ENCODE measurements at regions of chr18 and their contacts with region 1.

Region 1: GRCh38 chr18:59402432-59403090 is 43.5 kb upstream of the LMAN1 start:
- DNase-seq: peak; percentile 83
- H3K4me3 ChIP-seq: no peak overlapping the region
- H3K27ac ChIP-seq: no peak overlapping the region
- H3K4me1 ChIP-seq: peaks cover 0 to 4% (median 0%) of the 10 kb centered on the region in 6 donors
- H3K27me3 ChIP-seq: peaks cover 0 to 8% (median 0%) of the 10 kb centered on the region in 7 donors
- CTCF ChIP-seq: peak; percentile 67 to 88 (median 83)
- POLR2A ChIP-seq: no peak

Region 2: GRCh38 chr18:59249205-59249774 is 153.3 kb before region 1 on chr18:
- intact Hi-C with region 1: loop called (anchors 5 kb)
- DNase-seq: no peak
- H3K4me3 ChIP-seq: no peak overlapping the region
- H3K27ac ChIP-seq: no peak overlapping the region
- H3K4me1 ChIP-seq: no peaks in the 10 kb centered on the region
- H3K27me3 ChIP-seq: peaks cover 0 to 52% (median 17%) of the 10 kb centered on the region in 7 donors
- CTCF ChIP-seq: peak in 10 of 11 experiments; percentile 21 to 70 (median 52)
- POLR2A ChIP-seq: no peak

Region 3: DNA sequence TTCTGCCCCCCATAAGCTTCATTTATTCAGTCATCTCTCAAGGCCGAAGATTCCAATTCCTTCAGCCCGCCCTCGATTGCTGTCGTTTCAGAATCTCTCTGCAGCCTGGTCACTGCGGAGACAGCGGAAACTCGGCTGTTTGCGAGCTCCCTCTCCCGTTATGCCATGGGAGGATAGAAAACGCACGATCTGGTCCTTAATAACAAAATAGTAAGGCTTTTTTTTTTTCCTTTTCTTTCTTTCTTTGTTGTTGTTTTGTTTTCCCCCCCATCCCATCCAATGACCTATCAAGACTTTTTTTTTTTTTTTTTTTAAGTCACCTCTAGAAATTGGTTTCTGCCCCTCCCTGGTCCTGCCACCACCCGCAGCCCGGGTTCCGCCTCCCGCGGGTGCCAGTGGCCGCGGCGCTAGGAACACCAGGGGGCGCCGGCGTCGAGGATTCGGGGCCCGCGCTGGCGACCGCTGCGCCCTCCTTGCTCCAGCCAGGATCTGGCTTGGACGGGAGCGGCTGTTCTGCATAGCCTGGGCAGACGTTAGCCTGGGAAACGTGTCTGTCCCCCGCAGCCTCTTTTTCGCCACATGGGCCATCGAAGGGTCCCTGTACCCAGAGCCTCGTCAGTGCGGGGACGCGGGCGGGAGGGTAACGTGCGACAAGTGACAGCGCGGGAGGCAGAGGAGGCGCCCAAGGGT is 94.2 kb before region 1 on chr18:
- intact Hi-C with region 1: loop called (anchors 5 kb)
- DNase-seq: peak; percentile 86
- H3K4me3 ChIP-seq: peak overlapping the region in 5 of 8 donors; percentile 12 to 59 (median 37)
- H3K27ac ChIP-seq: no peak overlapping the region
- H3K4me1 ChIP-seq: peaks cover 0 to 15% (median 10%) of the 10 kb centered on the region in 6 donors
- H3K27me3 ChIP-seq: peaks cover 0 to 54% (median 23%) of the 10 kb centered on the region in 7 donors
- CTCF ChIP-seq: peak; percentile 49 to 86 (median 74)
- POLR2A ChIP-seq: no peak

Region 4: GRCh38 chr18:59814891-59815290 is 412.3 kb after region 1 on chr18:
- intact Hi-C with region 1: no loop called
- DNase-seq: no peak
- H3K4me3 ChIP-seq: no peak overlapping the region
- H3K27ac ChIP-seq: peak overlapping the region in 2 of 8 donors; percentile 42
- H3K4me1 ChIP-seq: no peaks in the 10 kb centered on the region
- H3K27me3 ChIP-seq: no peaks in the 10 kb centered on the region
- CTCF ChIP-seq: no peak
- POLR2A ChIP-seq: no peak

Measured in spleen (tissue), 13 donors.